PC-3 (cell line): ENCODE measurements at regions of chr20 and their contacts with region 1.

Region 1: DNA sequence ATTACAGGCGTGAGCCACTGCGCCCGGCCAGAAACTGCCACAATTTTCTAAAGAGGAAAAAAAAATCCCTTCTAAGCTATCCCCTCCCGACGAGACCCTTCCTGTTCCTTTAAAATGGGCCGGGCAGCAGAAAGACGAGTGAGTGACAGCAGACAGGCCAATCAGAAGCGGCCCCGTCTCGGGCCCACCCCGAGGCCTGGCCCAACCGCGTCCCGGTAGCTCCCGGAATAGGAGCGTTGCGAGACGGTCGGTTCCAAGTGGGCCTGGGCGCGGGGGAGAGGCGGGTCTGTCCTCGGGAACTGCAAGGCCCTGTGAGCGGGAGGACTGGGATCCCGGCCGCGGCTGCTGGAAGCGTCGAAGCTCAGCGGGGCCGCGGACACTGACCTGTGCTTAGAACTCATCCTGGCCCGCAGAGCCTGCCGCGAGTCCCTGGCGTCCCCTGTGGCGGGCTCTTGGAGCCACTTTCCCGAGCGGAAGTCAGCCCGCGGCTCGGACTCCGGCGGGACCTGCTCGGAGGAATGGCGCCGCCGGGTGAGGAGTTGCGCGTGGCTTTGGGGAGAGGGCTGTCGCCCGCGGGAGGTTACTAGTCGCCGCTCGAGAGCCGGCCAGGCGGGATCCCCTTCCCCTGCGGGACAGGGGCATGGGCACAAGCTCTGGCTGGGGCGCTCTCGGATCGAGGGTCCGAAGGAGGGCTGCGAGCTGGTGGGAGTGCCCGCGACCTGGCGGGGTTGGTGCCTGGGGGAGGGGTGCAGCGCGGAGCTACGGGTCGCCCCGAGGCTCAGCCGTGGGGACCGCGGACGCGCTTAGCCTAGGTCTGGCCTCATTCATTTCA is at the starts of genes MROH8 and RPN2:
- DNase-seq: peak; percentile 96
- ATAC-seq: peak; percentile 93
- H3K4me3 ChIP-seq: peak within 1 kb of the TSS; percentile 96
- H3K27ac ChIP-seq: peak within 1 kb of the TSS; percentile 92
- H3K4me1 ChIP-seq: peaks cover 24% of the 10 kb centered on the region
- H3K27me3 ChIP-seq: no peaks in the 10 kb centered on the region
- CTCF ChIP-seq: no peak
- total RNA-seq, gene MROH8: 0.58 and 0.98 TPM in 2 replicates
- total RNA-seq, gene RPN2: 257 and 274 TPM in 2 replicates

Region 2: DNA sequence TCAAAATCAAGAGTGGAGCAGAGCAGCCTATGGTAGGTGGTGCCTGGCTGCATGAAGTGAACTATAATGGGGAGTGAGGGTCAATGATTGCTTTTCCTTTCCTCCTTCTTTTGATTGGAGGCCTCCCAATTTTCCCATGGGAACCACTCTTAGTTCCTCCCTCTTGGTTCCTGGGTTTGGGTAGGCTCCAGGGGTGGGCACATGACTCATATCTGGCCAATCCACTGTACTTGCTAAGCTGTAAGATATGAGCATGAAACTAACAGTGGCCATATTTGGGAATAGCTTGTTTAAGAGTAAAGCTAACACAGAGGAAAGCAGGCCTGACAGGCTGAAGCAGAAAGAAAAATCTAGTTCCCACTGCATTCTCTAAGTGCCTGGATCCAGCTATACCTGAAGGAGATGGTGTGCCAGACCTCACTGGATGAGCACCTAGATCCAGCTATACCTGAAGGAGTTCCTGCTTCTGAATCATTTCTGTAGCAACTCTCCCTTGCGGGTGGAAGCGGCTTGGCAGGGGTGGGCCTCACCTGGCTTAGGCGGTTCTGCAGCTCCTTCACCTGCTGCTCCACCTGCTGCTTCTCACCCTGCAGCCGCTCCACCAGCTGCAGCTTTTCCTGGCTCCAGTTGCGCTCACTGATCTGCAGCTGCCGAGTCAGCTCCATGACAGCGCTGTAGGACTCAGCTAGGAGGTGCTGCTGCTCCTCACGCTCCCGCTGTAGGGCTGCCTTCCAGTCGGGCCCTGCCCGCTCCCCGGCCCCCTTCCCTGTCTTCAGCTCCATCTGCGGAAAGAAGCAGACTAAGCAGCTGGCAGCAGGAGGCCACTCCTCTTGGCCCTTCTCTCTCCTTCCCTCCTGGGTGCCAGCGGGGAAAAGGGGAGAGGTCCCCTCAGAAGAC is 376.5 kb before region 1 on chr20:
- CTCF ChIA-PET with region 1: no interaction called
- POLR2A ChIA-PET with region 1: no interaction called
- intact Hi-C with region 1: no loop called
- DNase-seq: peak; percentile 11
- ATAC-seq: peak; percentile 53; the same call in 1 of the 2 replicates
- H3K4me3 ChIP-seq: no peak overlapping the region
- H3K27ac ChIP-seq: no peak overlapping the region
- H3K4me1 ChIP-seq: no peaks in the 10 kb centered on the region
- H3K27me3 ChIP-seq: no peaks in the 10 kb centered on the region
- CTCF ChIP-seq: no peak

Region 3: DNA sequence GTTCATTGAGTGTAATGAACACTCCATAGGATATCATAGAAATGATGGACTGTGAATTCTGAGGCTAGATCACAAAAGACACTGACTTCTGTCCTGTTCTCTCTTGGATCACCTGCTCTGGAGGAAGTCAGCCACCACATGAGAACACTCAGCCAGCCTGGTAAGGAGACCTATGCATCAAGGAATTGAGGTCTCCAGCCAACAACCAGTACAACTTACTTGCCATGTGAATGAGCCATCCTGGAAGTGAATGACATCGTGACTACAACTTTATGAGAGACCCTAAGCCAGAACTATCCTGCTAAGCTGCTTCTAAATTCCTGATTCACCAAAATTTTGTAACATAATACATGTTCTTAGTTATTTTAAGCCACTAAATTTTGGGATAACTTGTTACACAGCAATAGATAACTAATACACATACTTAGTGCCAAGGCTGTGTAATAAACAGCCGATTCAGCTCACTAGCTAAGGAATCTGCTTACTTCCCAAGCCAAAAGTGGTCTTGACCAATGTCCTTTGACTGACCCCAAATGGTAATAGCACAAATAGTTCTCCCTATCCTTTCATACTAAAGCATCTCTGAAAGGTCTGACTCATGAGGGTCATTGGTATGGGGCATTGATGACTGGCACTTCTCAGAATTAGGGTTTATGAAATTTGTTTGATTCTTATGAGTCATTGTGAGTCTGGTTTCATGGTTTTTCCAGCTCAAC is 507.9 kb after region 1 on chr20:
- CTCF ChIA-PET with region 1: no interaction called
- POLR2A ChIA-PET with region 1: interaction called, 12 read pairs
- intact Hi-C with region 1: no loop called
- DNase-seq: peak; percentile 90
- ATAC-seq: peak; percentile 88
- H3K4me3 ChIP-seq: peak overlapping the region; percentile 23; the same call in 1 of the 2 replicates
- H3K27ac ChIP-seq: peak overlapping the region; percentile 84
- H3K4me1 ChIP-seq: peaks cover 24% of the 10 kb centered on the region
- H3K27me3 ChIP-seq: no peaks in the 10 kb centered on the region
- CTCF ChIP-seq: no peak